ENCODE measurements at regions of chr19 and their contacts with region 1.

Region 1: DNA sequence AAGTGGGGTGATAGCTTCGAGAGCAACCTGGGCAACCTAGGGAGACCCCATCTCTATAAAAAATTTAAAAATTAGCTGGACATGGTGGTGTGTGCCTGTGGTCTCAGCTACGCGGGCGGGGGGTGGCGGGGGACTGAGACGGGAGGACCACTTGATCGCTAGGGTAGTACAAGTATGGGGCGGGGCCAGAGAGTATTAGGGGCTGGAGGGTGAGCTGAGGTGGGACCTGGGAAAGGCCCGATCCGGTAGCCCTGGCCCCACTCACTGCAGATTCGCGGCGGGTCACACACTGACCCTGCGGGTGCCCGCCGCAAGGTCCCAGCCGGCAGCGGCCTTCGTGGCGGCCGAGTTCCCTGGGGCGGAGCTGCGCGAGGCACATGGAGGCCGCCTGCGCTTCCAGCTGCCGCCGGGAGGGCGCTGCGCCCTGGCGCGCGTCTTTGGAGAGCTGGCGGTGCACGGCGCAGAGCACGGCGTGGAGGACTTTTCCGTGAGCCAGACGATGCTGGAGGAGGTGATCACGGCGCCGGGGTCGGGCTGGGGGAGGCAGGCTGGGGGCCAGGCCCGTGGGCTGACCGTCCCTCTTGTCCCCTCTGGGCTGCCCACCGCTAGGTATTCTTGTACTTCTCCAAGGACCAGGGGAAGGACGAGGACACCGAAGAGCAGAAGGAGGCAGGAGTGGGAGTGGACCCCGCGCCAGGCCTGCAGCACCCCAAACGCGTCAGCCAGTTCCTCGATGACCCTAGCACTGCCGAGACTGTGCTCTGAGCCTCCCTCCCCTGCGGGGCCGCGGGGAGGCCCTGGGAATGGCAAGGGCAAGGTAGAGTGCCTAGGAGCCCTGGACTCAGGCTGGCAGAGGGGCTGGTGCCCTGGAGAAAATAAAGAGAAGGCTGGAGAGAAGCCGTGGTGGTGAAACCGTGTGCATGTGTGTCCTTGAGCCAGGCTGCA is 2.0 kb upstream of the ARHGAP45 start:
- DNase-seq: peak; percentile 86
- ATAC-seq: peak; percentile 48
- H3K4me3 Mint-ChIP-seq: no peak overlapping the region
- H3K27ac Mint-ChIP-seq: no peak overlapping the region
- H3K4me1 Mint-ChIP-seq: peaks cover 33% of the 10 kb centered on the region
- H3K27me3 Mint-ChIP-seq: no peaks in the 10 kb centered on the region

Region 2: GRCh38 chr19:639253-640160 is 425.4 kb before region 1 on chr19 and contains the start of gene FGF22:
- CTCF ChIA-PET with region 1: no interaction called
- POLR2A ChIA-PET with region 1: no interaction called
- intact Hi-C with region 1: no loop called
- DNase-seq: peak; percentile 98
- ATAC-seq: peak; percentile 97
- H3K4me3 Mint-ChIP-seq: peak within 1 kb of the TSS; percentile 70
- H3K27ac Mint-ChIP-seq: peak within 1 kb of the TSS; percentile 64
- H3K4me1 Mint-ChIP-seq: peaks cover 6% of the 10 kb centered on the region
- H3K27me3 Mint-ChIP-seq: peaks cover 2% of the 10 kb centered on the region
- total RNA-seq, gene FGF22: not detected

Region 3: GRCh38 chr19:991174-991918 is 73.6 kb before region 1 on chr19:
- CTCF ChIA-PET with region 1: no interaction called
- POLR2A ChIA-PET with region 1: no interaction called
- intact Hi-C with region 1: loop called in 1 of 2 experiments (anchors 1 kb)
- DNase-seq: peak; percentile 91
- ATAC-seq: peak; percentile 80
- H3K4me3 Mint-ChIP-seq: no peak overlapping the region
- H3K27ac Mint-ChIP-seq: no peak overlapping the region
- H3K4me1 Mint-ChIP-seq: peaks cover 2% of the 10 kb centered on the region
- H3K27me3 Mint-ChIP-seq: no peaks in the 10 kb centered on the region

Region 4: DNA sequence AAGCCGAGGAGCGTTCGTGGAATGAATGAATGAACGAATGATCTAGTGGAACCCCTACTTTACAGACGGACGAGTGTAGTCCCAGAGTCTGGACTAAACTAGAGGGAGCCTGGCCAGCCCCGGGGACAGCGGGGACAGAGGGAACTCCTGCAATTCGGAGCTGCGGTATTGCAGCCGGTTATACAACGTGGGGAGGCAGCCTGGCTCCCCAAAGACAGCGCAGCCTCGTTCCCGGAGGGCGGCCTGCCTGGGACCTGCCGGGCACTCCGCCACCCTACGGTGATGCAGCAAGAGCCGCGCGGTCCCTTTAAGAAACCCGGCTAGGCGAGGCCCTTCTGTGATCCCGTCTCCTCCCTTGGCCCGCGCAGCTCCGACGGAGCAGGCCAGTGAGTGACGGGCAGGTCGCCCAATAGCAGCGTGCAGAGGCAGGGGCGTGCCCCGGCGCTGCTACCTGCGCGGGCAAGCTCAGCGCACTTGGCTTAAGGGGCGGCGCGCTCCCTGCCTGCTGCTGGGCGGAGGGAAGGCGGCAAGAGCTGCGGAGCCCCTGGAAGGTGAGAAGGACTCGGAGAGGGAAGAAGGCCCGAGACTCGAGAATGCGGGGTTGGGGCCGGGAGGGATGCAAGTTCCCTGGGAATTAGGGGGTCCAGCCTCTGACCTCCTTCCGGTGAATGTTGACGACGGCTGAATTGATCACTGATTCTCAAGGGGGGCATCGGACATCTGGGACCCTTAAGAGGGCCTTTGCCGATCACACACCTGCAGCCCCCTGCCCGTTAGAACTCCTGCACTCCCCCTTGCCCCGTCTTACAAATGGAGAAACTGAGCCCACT is 25.1 kb before region 1 on chr19 and contains the start of gene ABCA7:
- CTCF ChIA-PET with region 1: interaction called, 7 read pairs
- POLR2A ChIA-PET with region 1: interaction called, 3 read pairs
- intact Hi-C with region 1: loop called in 1 of 2 experiments (anchors 1 kb)
- DNase-seq: peak; percentile 100
- ATAC-seq: peak; percentile 96
- H3K4me3 Mint-ChIP-seq: peak within 1 kb of the TSS; percentile 86
- H3K27ac Mint-ChIP-seq: peak within 1 kb of the TSS; percentile 74
- H3K4me1 Mint-ChIP-seq: peaks cover 34% of the 10 kb centered on the region
- H3K27me3 Mint-ChIP-seq: no peaks in the 10 kb centered on the region
- total RNA-seq, gene ABCA7: 14.4 to 16.9 TPM

Region 5: DNA sequence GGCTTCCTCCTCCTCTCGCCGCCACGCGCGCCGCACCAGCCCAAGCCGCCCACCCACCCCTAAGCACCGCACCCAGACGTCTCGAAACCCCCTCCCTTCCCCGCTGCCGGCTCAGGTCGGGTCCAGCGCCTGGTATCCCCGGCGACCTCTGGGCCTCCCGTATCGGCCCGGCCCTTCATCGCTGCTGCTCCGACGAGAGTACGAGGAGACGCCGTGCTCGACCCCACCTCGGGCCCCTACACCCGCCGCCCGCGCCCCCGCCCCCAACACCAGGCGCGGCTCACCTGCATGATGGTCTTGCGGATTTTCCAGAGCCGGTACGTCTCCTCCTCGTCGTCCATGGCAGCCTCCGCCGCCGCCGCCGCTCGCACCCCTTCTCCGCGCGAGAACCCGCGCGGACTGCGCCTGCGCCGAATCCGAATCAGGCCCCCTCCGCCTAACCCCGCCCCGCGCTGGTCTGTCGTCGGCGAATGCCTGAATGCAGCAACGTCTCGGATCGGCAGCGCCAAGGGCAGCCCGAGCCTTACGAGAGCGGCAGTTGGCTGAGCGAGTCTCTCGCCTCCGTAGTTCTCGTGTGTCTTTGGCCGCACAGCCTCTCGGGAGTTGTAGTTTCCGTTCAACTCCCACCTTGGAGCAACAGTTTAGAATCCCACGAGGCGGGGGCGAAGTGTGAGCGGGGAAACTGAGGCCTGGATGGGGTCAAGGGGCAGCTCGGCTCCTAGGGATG is 30.2 kb after region 1 on chr19 and contains the start of gene POLR2E:
- CTCF ChIA-PET with region 1: interaction called, 4 read pairs
- POLR2A ChIA-PET with region 1: no interaction called
- intact Hi-C with region 1: loop called (anchors 1 to 5 kb)
- DNase-seq: peak; percentile 99
- ATAC-seq: peak; percentile 89
- H3K4me3 Mint-ChIP-seq: peak within 1 kb of the TSS; percentile 88
- H3K27ac Mint-ChIP-seq: peak within 1 kb of the TSS; percentile 93
- H3K4me1 Mint-ChIP-seq: peaks cover 49% of the 10 kb centered on the region
- H3K27me3 Mint-ChIP-seq: no peaks in the 10 kb centered on the region
- total RNA-seq, gene POLR2E: 171 to 229 TPM

Region 6: GRCh38 chr19:1168877-1169791 is 104.2 kb after region 1 on chr19:
- CTCF ChIA-PET with region 1: no interaction called
- POLR2A ChIA-PET with region 1: no interaction called
- intact Hi-C with region 1: no loop called
- DNase-seq: peak; percentile 36
- ATAC-seq: no peak
- H3K4me3 Mint-ChIP-seq: no peak overlapping the region
- H3K27ac Mint-ChIP-seq: peak overlapping the region; percentile 14
- H3K4me1 Mint-ChIP-seq: peaks cover 25% of the 10 kb centered on the region
- H3K27me3 Mint-ChIP-seq: no peaks in the 10 kb centered on the region

Region 7: GRCh38 chr19:1249298-1249989 is 184.5 kb after region 1 on chr19:
- CTCF ChIA-PET with region 1: interaction called, 9 read pairs
- POLR2A ChIA-PET with region 1: no interaction called
- intact Hi-C with region 1: loop called in 1 of 2 experiments (anchors 2 kb)
- DNase-seq: peak; percentile 97
- ATAC-seq: peak; percentile 53
- H3K4me3 Mint-ChIP-seq: peak overlapping the region; percentile 73
- H3K27ac Mint-ChIP-seq: no peak overlapping the region
- H3K4me1 Mint-ChIP-seq: peaks cover 9% of the 10 kb centered on the region
- H3K27me3 Mint-ChIP-seq: no peaks in the 10 kb centered on the region